Colonic mucosa (tissue), 4 donors: ENCODE measurements at regions of chr3 and their contacts with region 1.

Region 1: DNA sequence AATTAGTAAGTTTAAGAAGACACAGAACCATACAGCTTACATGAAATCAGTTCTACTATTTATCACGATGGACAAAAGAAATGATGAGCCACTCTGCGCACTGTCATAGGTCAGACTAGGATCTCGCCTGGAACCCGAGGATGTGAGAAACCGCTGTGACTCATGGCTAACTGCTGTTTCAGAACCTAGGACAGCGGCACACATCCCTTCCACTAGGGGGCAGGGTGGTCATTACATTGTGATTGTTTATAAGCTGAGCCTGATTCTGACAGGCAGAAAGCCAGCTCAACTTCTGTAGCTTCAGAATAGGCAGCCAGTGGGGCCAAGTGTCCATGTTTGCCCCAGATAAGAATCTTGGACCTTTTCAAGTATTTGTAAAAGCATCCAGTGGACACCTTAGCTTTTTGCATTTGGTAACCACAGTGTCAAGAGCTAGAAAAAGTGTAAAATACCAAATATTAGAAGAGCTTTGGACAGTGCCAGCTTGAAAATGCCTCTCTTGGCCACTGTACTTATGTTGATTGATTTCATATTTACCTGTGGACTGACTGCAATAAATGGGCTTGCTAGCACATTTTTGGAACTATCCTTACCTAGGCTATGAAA is 115.8 kb downstream of the KBTBD8 start:
- DNase-seq: peak; percentile 84
- H3K4me3 ChIP-seq: no peak overlapping the region
- H3K27ac ChIP-seq: no peak overlapping the region
- H3K4me1 ChIP-seq: no peaks in the 10 kb centered on the region
- H3K27me3 ChIP-seq: no peaks in the 10 kb centered on the region
- CTCF ChIP-seq: peak; percentile 81

Region 2: DNA sequence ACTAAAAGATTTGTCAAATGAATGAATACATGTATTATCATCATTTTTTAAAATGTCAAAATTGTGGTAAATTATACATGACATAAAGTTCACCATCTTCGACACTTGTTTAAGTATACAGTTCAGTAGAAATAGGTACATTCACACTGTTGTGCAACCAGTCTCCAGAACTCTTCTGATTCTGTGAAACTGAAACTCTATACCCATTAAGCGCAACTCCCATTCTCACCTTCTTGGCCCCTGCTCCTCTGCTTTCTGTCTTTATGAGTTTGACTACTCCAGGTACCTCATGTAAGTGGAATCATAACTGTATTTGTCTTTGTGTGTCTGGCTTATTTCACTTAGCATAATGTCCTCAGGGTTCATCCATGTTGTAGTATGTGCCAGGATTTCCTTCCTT is 165.9 kb before region 1 on chr3:
- intact Hi-C with region 1: loop called (anchors 10 kb)
- DNase-seq: no peak
- H3K4me3 ChIP-seq: no peak overlapping the region
- H3K27ac ChIP-seq: no peak overlapping the region
- H3K4me1 ChIP-seq: peaks cover 5% of the 10 kb centered on the region
- H3K27me3 ChIP-seq: no peaks in the 10 kb centered on the region
- CTCF ChIP-seq: no peak

Region 3: DNA sequence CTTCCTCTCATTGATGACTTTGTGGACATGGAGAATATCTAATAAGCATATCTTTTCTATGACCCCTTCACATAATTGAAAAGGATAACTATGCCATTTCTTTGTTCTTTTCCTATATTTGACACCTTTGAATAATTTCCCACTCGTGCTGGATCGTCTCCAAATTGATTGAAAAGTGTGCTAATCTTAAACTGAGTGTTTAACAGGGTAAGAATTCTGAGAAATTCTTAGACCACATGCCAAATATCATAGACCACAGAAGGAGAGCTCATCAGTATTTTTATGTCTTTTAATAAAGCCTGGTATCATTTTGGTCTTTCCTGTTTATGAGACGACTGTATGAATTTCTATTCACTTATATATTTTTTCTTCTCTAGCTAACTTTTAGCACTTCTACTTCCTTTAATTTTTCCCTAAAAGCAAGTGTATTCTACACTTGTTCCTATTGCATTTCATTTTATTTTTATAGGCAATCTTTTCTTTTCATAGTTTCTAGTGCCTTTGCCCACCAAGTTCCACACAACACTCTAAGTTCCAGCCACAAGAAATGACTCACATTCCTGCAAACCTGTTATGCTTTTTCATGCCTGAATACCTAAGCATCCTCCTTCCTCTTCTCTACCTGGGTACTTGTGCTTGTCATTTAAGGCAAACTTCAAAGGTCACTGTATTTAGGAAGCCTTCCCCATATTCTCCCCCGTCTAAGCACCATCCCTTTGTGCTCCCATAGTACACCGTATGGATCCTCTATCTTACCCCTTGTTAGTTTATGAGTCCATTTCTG is 85.7 kb before region 1 on chr3:
- intact Hi-C with region 1: no loop called
- DNase-seq: no peak
- H3K4me3 ChIP-seq: no peak overlapping the region
- H3K27ac ChIP-seq: no peak overlapping the region
- H3K4me1 ChIP-seq: no peaks in the 10 kb centered on the region
- H3K27me3 ChIP-seq: no peaks in the 10 kb centered on the region
- CTCF ChIP-seq: no peak

Region 4: DNA sequence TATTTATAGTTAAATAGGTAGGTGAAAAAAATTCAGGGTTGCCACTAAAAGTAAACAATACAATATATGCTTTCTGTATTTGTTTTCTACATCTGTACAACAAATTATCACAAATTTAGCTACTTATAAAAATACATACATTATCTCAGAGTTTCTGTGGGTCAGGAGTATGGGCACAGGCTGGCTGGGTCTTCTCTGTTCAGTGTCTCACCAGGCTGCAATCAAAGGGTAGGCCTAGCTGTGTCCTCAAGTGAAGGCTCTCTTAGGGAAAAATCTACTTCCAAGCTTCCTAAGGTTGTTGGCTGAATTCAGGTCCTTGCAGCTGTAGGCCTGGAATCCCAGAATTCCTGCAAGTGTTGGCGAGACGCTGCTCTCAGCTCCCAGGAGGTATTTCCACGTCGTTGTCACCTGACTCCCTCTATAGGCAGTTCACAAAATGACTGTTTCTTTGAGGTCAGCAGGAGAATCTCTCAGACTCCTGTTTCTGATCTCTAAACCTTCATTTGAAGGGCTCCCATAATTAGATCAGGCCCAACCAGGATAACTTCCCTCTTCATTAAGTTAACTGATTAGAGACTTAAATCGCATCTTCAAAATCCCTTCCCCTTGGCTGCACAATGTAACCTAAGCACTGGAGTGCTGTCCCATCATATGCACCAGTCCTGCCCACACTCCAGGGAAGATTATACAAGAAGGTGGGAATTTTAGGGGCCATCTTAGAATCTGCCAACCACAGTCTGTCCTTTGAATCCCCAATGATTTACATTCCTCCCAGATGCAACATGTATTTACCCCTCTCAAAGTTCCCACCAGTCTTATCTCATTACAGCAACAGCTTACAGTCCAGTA is 243.9 kb after region 1 on chr3:
- intact Hi-C with region 1: loop called (anchors 5 kb)
- DNase-seq: no peak
- H3K4me3 ChIP-seq: no peak overlapping the region
- H3K27ac ChIP-seq: no peak overlapping the region
- H3K4me1 ChIP-seq: no peaks in the 10 kb centered on the region
- H3K27me3 ChIP-seq: no peaks in the 10 kb centered on the region
- CTCF ChIP-seq: peak; percentile 34

Region 5: DNA sequence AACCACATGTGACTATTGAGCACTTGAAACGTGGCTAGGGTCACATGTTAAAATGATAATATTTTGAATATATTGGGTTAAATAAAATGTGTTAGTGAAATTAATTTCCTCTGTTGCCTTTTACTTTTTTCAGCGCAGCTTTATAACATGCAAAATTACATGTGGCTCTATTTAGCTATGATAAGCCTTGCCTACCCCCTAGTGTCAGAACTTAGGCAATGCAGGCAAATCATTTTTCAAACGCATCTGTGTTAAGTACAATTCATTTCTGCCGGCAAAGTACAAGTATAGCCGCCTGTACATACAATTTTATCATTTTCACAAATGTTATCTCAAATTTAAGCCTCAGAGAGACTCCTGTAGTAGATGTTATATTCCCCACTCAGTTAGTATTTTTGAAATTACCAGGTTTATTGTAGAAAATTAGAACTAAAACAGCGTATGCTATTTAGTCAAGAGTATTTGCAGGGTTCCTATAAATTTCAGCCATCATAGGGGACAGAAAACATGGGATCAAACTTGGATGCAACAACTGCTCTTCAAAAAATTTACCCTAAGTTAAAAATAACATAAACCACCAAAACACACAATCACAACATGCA is 1762.3 kb after region 1 on chr3:
- intact Hi-C with region 1: loop called (anchors 5 kb)
- DNase-seq: peak; percentile 27
- H3K4me3 ChIP-seq: no peak overlapping the region
- H3K27ac ChIP-seq: no peak overlapping the region
- H3K4me1 ChIP-seq: no peaks in the 10 kb centered on the region
- H3K27me3 ChIP-seq: no peaks in the 10 kb centered on the region
- CTCF ChIP-seq: peak; percentile 88

Region 6: GRCh38 chr3:68893600-68894239 is 1779.8 kb after region 1 on chr3:
- intact Hi-C with region 1: loop called (anchors 5 kb)
- DNase-seq: no peak
- H3K4me3 ChIP-seq: no peak overlapping the region
- H3K27ac ChIP-seq: no peak overlapping the region
- H3K4me1 ChIP-seq: no peaks in the 10 kb centered on the region
- H3K27me3 ChIP-seq: no peaks in the 10 kb centered on the region
- CTCF ChIP-seq: peak; percentile 41